H1 (cell line): ENCODE measurements at regions of chr17 and their contacts with region 1.

Region 1: GRCh38 chr17:50547035-50547735 is at the start of gene SPATA20:
- DNase-seq: peak; percentile 78 to 92
- H3K4me3 ChIP-seq: peak within 1 kb of the TSS; percentile 32 to 67 (median 57)
- H3K27ac ChIP-seq: no peak within 1 kb of the TSS; the same call in 1 of the 2 replicates
- H3K4me1 ChIP-seq: peaks cover 6 to 20% (median 13%) of the 10 kb centered on the region in 4 experiments
- H3K27me3 ChIP-seq: no peaks in the 10 kb centered on the region
- CTCF ChIP-seq: peak; percentile 94 to 97 (median 96)
- EP300 ChIP-seq: no peak
- POLR2A ChIP-seq: peak in 1 of 2 experiments; percentile 83; a peak in 2 of 3 replicates
- RAD21 ChIP-seq: peak; percentile 99
- total RNA-seq, gene SPATA20: 16.2 and 16.7 TPM in 2 replicates

Region 2: DNA sequence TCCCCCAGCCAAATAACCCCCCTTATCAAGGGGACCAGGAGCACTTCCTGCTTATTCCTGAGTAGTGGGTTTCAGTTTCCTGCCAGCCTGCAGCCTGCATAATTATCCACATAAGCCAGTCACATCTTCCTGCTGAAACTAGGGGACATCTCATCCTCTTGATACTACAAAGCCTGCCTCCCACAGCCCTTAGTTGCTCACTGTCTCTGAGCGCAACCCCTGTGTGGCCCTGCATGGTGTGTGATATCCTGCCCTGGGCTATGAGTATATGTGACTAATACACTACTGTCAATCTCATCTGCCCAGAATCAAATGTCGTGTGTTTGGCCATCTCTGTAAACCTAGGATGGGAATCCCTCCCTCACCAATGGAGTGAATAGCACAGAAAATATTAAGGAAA is 209.2 kb before region 1 on chr17:
- CTCF ChIA-PET with region 1: no interaction called
- POLR2A ChIA-PET with region 1: no interaction called
- DNase-seq: no peak
- H3K4me3 ChIP-seq: no peak overlapping the region
- H3K27ac ChIP-seq: no peak overlapping the region
- H3K4me1 ChIP-seq: no peaks in the 10 kb centered on the region
- H3K27me3 ChIP-seq: no peaks in the 10 kb centered on the region
- CTCF ChIP-seq: no peak
- EP300 ChIP-seq: no peak
- POLR2A ChIP-seq: no peak
- RAD21 ChIP-seq: no peak

Region 3: DNA sequence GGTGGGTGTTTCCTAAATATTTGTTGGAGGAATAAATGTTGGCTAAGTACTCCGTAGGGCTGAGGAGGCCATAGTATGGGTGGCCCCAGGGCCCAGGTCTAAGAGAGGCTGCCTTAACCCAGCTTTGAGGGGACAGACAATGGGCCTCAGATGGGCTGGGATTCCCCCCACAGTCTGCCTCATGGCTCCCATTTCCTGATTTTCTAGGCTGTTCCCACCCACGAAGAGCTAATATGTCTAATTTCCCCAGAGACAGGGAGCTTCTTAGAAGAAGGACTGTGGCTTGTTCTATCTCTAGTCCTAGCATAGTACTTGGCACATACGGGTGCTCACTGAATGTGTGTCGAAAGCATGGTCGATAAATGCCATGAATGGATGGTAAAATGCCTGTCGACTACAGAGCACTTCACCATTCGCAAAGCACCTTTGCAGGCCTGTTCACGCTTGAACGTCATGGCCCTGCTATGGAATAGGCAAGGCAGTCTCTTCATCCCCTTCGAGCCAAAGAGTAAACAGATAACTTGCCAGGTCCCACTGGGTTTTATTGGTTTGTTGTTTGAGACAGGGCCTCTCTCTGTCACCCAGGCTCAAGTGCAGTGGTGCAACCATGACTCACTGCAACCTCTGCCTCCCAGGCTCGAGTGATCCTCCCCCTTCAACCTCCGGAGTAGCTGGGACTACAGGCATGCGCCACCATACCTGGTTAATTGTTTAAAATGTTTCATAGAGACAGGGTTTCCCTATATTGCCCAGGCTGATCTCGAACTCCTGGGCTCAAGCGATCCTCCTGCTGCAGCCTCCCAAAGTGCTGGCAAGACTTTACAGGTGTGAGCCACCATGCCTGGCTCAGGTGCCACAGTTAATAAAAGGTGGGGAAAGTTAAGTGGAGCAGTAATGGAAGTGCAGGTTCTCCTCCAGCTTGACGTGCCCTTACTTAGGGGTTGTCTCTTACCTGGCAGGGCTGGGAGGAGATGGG is 88.2 kb before region 1 on chr17:
- CTCF ChIA-PET with region 1: no interaction called
- POLR2A ChIA-PET with region 1: no interaction called
- DNase-seq: no peak
- H3K4me3 ChIP-seq: no peak overlapping the region
- H3K27ac ChIP-seq: no peak overlapping the region
- H3K4me1 ChIP-seq: no peaks in the 10 kb centered on the region
- H3K27me3 ChIP-seq: no peaks in the 10 kb centered on the region
- CTCF ChIP-seq: no peak
- EP300 ChIP-seq: no peak
- POLR2A ChIP-seq: no peak
- RAD21 ChIP-seq: no peak

Region 4: DNA sequence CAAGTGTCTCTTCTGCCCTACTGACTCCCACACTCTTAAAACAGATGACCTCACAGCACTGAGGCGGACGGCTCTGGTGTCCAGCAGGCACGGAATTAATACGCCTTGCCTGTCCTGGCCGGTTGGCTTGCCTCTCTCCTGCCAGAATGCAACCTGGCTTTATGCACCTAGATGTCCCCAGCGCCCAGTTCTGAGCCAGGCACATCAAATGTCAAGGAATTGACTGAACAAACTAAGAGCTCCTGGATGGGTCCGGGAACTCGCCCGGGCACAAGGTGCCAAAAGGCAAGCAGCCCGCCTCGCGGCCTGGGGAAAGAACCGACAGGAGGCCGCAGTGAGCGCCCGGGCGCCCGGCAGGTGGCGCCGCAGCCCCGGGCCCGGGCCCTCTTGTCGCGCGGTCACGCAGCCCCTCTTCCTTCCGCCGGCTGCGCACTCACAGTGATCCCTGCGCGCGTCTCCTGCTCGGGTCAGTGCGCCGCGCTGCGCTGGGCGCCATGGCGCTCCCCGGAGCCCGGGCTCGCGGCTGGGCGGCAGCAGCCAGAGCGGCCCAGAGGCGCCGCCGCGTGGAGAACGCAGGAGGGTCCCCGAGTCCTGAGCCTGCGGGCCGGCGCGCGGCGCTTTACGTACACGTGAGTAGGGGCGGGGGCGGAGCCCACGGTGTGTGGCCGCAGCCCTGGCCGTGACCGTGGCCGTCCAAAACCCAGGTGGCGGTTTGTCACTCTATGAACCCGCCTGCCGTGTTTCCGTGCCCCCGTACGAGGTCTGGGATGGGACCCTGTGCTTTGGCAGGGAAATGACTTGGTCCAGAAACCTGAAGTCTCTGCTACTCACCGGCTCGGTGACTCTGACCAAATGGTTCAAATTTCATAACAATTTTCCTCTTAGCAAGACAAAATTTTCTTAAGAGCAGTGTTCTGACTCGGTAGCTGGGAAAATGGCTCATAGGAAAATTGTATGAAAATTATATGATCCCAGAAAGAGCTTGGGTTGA is 68.5 kb before region 1 on chr17 and contains the start of gene RSAD1:
- CTCF ChIA-PET with region 1: interaction called, 42 read pairs
- POLR2A ChIA-PET with region 1: no interaction called
- DNase-seq: peak; percentile 68 to 84
- H3K4me3 ChIP-seq: peak within 1 kb of the TSS; percentile 46 to 81 (median 72)
- H3K27ac ChIP-seq: no peak within 1 kb of the TSS; the same call in 1 of the 2 replicates
- H3K4me1 ChIP-seq: peaks cover 0 to 10% (median 6%) of the 10 kb centered on the region in 4 experiments; a peak in 6 of 7 replicates
- H3K27me3 ChIP-seq: peaks cover 0 to 4% (median under 1%) of the 10 kb centered on the region in 4 experiments; a peak in 2 of 7 replicates
- CTCF ChIP-seq: peak; percentile 66 to 91 (median 67)
- EP300 ChIP-seq: no peak; a peak in 1 of 3 replicates
- POLR2A ChIP-seq: peak in 1 of 2 experiments; percentile 87; a peak in 2 of 3 replicates
- RAD21 ChIP-seq: peak; percentile 40 to 58; a peak in 3 of 4 replicates
- total RNA-seq, gene RSAD1: 31.3 and 33.5 TPM in 2 replicates

Region 5: GRCh38 chr17:50565402-50566350 is 18.5 kb after region 1 on chr17:
- CTCF ChIA-PET with region 1: interaction called, 66 read pairs
- POLR2A ChIA-PET with region 1: interaction called, 7 read pairs
- DNase-seq: no peak
- H3K4me3 ChIP-seq: peak overlapping the region in 1 of 4 experiments; percentile 44; a peak in 1 of 8 replicates
- H3K27ac ChIP-seq: no peak overlapping the region
- H3K4me1 ChIP-seq: peaks cover 0 to 32% (median 21%) of the 10 kb centered on the region in 4 experiments; a peak in 6 of 7 replicates
- H3K27me3 ChIP-seq: peaks cover 27 to 58% (median 54%) of the 10 kb centered on the region in 4 experiments
- CTCF ChIP-seq: no peak
- EP300 ChIP-seq: no peak
- POLR2A ChIP-seq: no peak
- RAD21 ChIP-seq: no peak

Region 6: GRCh38 chr17:50596191-50597037 is 49.2 kb after region 1 on chr17:
- CTCF ChIA-PET with region 1: interaction called, 35 read pairs
- POLR2A ChIA-PET with region 1: no interaction called
- DNase-seq: peak; percentile 38 to 88
- H3K4me3 ChIP-seq: no peak overlapping the region
- H3K27ac ChIP-seq: no peak overlapping the region
- H3K4me1 ChIP-seq: peaks cover 0 to 12% (median 7%) of the 10 kb centered on the region in 4 experiments; a peak in 6 of 7 replicates
- H3K27me3 ChIP-seq: no peaks in the 10 kb centered on the region; a peak in 1 of 7 replicates
- CTCF ChIP-seq: peak; percentile 74 to 83 (median 79)
- EP300 ChIP-seq: no peak
- POLR2A ChIP-seq: no peak
- RAD21 ChIP-seq: peak; percentile 37 to 68

Region 7: GRCh38 chr17:50638851-50639767 is 91.9 kb after region 1 on chr17:
- CTCF ChIA-PET with region 1: interaction called, 30 read pairs
- POLR2A ChIA-PET with region 1: no interaction called
- DNase-seq: no peak
- H3K4me3 ChIP-seq: no peak overlapping the region
- H3K27ac ChIP-seq: no peak overlapping the region
- H3K4me1 ChIP-seq: peaks cover 0 to 11% (median 7%) of the 10 kb centered on the region in 4 experiments; a peak in 4 of 7 replicates
- H3K27me3 ChIP-seq: peaks cover 18 to 27% (median 27%) of the 10 kb centered on the region in 4 experiments
- CTCF ChIP-seq: no peak
- EP300 ChIP-seq: no peak
- POLR2A ChIP-seq: no peak
- RAD21 ChIP-seq: no peak

Region 8: GRCh38 chr17:50691545-50692447 is 144.6 kb after region 1 on chr17:
- CTCF ChIA-PET with region 1: interaction called, 112 read pairs
- POLR2A ChIA-PET with region 1: no interaction called
- DNase-seq: no peak
- H3K4me3 ChIP-seq: no peak overlapping the region
- H3K27ac ChIP-seq: no peak overlapping the region
- H3K4me1 ChIP-seq: peaks cover 1 to 18% (median 8%) of the 10 kb centered on the region in 4 experiments; a peak in 6 of 7 replicates
- H3K27me3 ChIP-seq: no peaks in the 10 kb centered on the region
- CTCF ChIP-seq: no peak
- EP300 ChIP-seq: no peak
- POLR2A ChIP-seq: no peak
- RAD21 ChIP-seq: no peak